ENCODE measurements at regions of chr3 and their contacts with region 1.

Region 1: GRCh38 chr3:127911421-127911931 is 3.6 kb upstream of the KBTBD12 start:
- DNase-seq: no peak
- H3K4me3 ChIP-seq: no peak overlapping the region
- H3K27ac ChIP-seq: no peak overlapping the region
- H3K4me1 ChIP-seq: peaks cover 6% of the 10 kb centered on the region
- H3K27me3 ChIP-seq: peaks cover 5% of the 10 kb centered on the region
- CTCF ChIP-seq: no peak

Region 2: DNA sequence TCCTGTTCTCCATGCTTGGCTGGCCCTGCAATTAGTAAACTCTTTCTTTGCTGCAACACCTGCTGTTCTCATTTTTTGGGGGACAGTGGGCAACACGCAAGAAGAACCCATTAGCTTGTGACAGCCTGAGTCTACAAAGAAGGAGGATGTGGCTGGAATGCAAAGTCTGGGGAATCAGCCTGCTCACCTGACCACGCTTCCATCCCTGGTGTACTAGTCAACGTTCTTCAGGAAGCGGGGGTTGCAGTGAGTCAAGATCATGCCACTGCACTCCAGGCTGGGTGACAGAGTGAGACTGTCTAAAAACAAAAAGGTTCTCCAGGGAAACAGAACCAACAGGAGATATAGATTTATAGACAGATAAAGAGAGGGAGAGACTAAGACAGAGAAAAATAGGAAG is 24.2 kb before region 1 on chr3:
- CTCF ChIA-PET with region 1: no interaction called
- dilution Hi-C with region 1: no loop called
- in situ Hi-C with region 1: no loop called
- intact Hi-C with region 1: loop called (anchors 2 kb)
- DNase-seq: peak; percentile 89
- H3K4me3 ChIP-seq: no peak overlapping the region
- H3K27ac ChIP-seq: peak overlapping the region; percentile 70
- H3K4me1 ChIP-seq: peaks cover 33% of the 10 kb centered on the region
- H3K27me3 ChIP-seq: no peaks in the 10 kb centered on the region
- CTCF ChIP-seq: no peak

Region 3: GRCh38 chr3:127953091-127954035 is 41.9 kb after region 1 on chr3:
- CTCF ChIA-PET with region 1: no interaction called
- dilution Hi-C with region 1: no loop called
- in situ Hi-C with region 1: no loop called
- intact Hi-C with region 1: no loop called
- DNase-seq: no peak
- H3K4me3 ChIP-seq: no peak overlapping the region
- H3K27ac ChIP-seq: no peak overlapping the region
- H3K4me1 ChIP-seq: no peaks in the 10 kb centered on the region
- H3K27me3 ChIP-seq: no peaks in the 10 kb centered on the region
- CTCF ChIP-seq: no peak

Region 4: GRCh38 chr3:128001576-128001975 is 90.1 kb after region 1 on chr3:
- CTCF ChIA-PET with region 1: no interaction called
- dilution Hi-C with region 1: loop called (anchors 5 kb)
- in situ Hi-C with region 1: no loop called
- intact Hi-C with region 1: no loop called
- DNase-seq: no peak
- H3K4me3 ChIP-seq: no peak overlapping the region
- H3K27ac ChIP-seq: no peak overlapping the region
- H3K4me1 ChIP-seq: peaks cover 1% of the 10 kb centered on the region
- H3K27me3 ChIP-seq: no peaks in the 10 kb centered on the region
- CTCF ChIP-seq: no peak

Measured in mammary epithelial cell (primary cell).